ENCODE measurements at regions of chr11 and their contacts with region 1.

Region 1: DNA sequence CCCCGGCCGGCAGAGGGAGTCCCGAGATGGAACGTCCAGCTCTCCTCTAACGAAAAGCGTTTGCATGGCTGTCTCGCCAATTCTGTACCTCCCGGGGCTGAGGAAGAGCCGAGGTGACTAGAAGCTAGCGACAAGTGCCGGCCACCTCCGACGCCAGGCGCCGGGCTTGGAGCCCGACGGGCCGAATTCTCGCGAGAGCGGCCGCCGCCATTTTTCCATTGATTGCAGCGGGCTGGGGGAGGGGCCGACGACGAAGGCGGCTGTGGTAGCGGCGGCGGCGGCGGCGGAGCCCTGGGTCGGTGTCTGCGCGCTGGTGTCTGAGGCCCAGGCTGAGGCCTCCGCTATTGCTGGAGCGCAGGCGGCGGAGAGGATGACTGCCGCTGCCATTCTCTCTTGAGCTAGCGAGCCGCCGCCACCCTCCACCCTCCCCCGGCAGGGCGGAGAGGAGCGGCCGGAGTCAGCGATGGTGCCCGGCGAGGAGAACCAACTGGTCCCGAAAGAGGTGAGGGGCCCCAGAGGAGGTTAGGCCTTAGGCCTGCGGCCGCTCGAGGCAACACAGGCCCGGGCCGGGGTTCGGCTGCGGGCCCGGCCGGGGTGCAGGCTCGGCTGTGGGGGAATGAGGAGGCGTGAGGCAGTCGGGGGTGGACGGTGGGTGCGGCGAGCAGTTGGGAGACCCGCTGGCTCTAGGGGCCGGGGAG is at the start of gene USP47:
- DNase-seq: peak; percentile 95
- H3K4me3 Mint-ChIP-seq: no peak within 1 kb of the TSS
- H3K27ac Mint-ChIP-seq: no peak within 1 kb of the TSS
- H3K4me1 Mint-ChIP-seq: peaks cover 25% of the 10 kb centered on the region
- H3K27me3 Mint-ChIP-seq: no peaks in the 10 kb centered on the region
- total RNA-seq, gene USP47: 58.5 to 64.0 TPM

Region 2: GRCh38 chr11:10455637-10456487 is 1386.0 kb before region 1 on chr11:
- CTCF ChIA-PET with region 1: no interaction called
- POLR2A ChIA-PET with region 1: no interaction called
- intact Hi-C with region 1: loop called (anchors 5 kb)
- DNase-seq: peak; percentile 89
- H3K4me3 Mint-ChIP-seq: peak overlapping the region; percentile 79
- H3K27ac Mint-ChIP-seq: peak overlapping the region; percentile 93
- H3K4me1 Mint-ChIP-seq: peaks cover 83% of the 10 kb centered on the region
- H3K27me3 Mint-ChIP-seq: no peaks in the 10 kb centered on the region

Region 3: GRCh38 chr11:10857709-10858438 is 984.0 kb before region 1 on chr11 and contains the start of gene ZBED5:
- CTCF ChIA-PET with region 1: no interaction called
- POLR2A ChIA-PET with region 1: interaction called, 3 read pairs
- intact Hi-C with region 1: loop called (anchors 5 kb)
- DNase-seq: peak; percentile 98
- H3K4me3 Mint-ChIP-seq: peak within 1 kb of the TSS; percentile 97
- H3K27ac Mint-ChIP-seq: peak within 1 kb of the TSS; percentile 99
- H3K4me1 Mint-ChIP-seq: peaks cover 33% of the 10 kb centered on the region
- H3K27me3 Mint-ChIP-seq: no peaks in the 10 kb centered on the region
- total RNA-seq, gene ZBED5: 39.8 to 43.3 TPM

Region 4: GRCh38 chr11:11798586-11799438 is 43.1 kb before region 1 on chr11:
- CTCF ChIA-PET with region 1: interaction called, 15 read pairs
- POLR2A ChIA-PET with region 1: no interaction called
- intact Hi-C with region 1: no loop called
- DNase-seq: peak; percentile 85
- H3K4me3 Mint-ChIP-seq: no peak overlapping the region
- H3K27ac Mint-ChIP-seq: no peak overlapping the region
- H3K4me1 Mint-ChIP-seq: no peaks in the 10 kb centered on the region
- H3K27me3 Mint-ChIP-seq: peaks cover 21% of the 10 kb centered on the region

Region 5: GRCh38 chr11:11884774-11885481 is 43.1 kb after region 1 on chr11:
- CTCF ChIA-PET with region 1: no interaction called
- POLR2A ChIA-PET with region 1: no interaction called
- intact Hi-C with region 1: loop called (anchors 5 kb)
- DNase-seq: no peak
- H3K4me3 Mint-ChIP-seq: no peak overlapping the region
- H3K27ac Mint-ChIP-seq: no peak overlapping the region
- H3K4me1 Mint-ChIP-seq: peaks cover 56% of the 10 kb centered on the region
- H3K27me3 Mint-ChIP-seq: no peaks in the 10 kb centered on the region

Region 6: DNA sequence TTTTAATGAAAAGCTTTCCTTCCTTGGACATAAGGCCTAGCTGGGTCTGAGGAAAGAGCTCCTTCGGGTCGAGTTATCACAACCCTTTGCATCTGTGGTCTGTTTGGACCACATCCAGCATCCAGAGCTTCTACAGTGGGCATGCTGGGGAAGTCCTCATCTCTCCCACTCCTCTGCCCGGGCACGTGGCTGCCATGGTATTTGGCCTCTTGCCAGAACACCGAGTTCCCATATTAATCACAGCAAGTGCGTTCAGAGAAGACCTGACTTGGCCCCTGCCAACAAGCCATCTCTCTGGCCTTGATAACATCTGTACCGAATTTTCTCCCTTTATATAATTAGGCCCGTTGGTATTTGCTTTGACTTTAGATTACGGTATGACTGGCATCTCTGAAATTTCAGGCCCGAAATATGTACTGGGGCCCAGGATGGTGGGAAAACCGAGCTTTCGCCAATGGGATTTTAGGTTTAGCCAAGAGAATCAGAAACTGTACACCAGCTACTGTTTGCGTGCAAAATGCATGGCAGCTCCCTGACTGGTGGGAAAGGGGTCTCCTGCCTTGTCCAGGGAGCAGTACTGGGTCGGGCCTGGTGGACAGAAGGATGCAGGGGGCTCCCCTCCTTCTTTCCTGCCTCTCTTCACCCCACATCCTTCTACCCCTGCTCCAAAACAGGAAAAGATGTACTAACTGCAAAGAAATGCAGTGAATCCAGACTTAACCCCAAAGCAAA is 358.6 kb after region 1 on chr11:
- CTCF ChIA-PET with region 1: no interaction called
- POLR2A ChIA-PET with region 1: no interaction called
- intact Hi-C with region 1: loop called (anchors 5 kb)
- DNase-seq: peak; percentile 72
- H3K4me3 Mint-ChIP-seq: peak overlapping the region; percentile 26
- H3K27ac Mint-ChIP-seq: peak overlapping the region; percentile 98
- H3K4me1 Mint-ChIP-seq: peaks cover 89% of the 10 kb centered on the region
- H3K27me3 Mint-ChIP-seq: no peaks in the 10 kb centered on the region

Region 7: DNA sequence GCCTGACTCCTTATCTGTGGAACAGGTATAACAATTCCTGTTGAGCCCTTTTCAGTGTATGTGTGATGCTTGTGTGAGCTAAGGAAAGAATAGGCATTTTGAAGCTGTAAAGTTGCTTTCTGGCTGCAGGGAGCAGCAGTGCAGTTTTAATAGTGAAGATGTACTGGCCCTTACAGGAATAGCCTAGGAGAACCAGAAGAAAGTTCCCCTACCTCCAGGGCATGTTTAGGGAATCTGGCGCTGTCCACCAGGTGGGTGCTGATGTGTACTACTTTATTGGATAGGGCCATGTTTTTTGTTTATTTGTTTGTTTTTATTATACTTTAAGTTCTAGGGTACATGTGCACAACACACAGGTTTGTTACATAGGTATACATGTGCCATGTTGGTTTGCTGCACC is 1447.2 kb after region 1 on chr11:
- CTCF ChIA-PET with region 1: no interaction called
- POLR2A ChIA-PET with region 1: no interaction called
- intact Hi-C with region 1: loop called (anchors 2 kb)
- DNase-seq: no peak
- H3K4me3 Mint-ChIP-seq: no peak overlapping the region
- H3K27ac Mint-ChIP-seq: no peak overlapping the region
- H3K4me1 Mint-ChIP-seq: peaks cover 81% of the 10 kb centered on the region
- H3K27me3 Mint-ChIP-seq: no peaks in the 10 kb centered on the region

Measured in activated CD4-positive, alpha-beta memory T cell treated with anti-CD3 and anti-CD28 coated beads for 36 hours (primary cell).